Mammary epithelial cell (primary cell): ENCODE measurements at regions of chr13 and their contacts with region 1.

Region 1: GRCh38 chr13:108176685-108177274 is 38.6 kb downstream of the LIG4 start:
- DNase-seq: peak; percentile 21
- H3K4me3 ChIP-seq: no peak overlapping the region
- H3K27ac ChIP-seq: no peak overlapping the region
- H3K4me1 ChIP-seq: no peaks in the 10 kb centered on the region
- H3K27me3 ChIP-seq: no peaks in the 10 kb centered on the region
- CTCF ChIP-seq: peak; percentile 61 to 62

Region 2: GRCh38 chr13:108200781-108201398 is 24.1 kb after region 1 on chr13:
- CTCF ChIA-PET with region 1: no interaction called
- dilution Hi-C with region 1: no loop called
- in situ Hi-C with region 1: no loop called
- intact Hi-C with region 1: loop called (anchors 2 kb)
- DNase-seq: peak; percentile 60
- H3K4me3 ChIP-seq: no peak overlapping the region
- H3K27ac ChIP-seq: no peak overlapping the region
- H3K4me1 ChIP-seq: peaks cover 17% of the 10 kb centered on the region
- H3K27me3 ChIP-seq: no peaks in the 10 kb centered on the region
- CTCF ChIP-seq: no peak